Panc1 (cell line): ENCODE measurements at regions of chr4 and their contacts with region 1.

Region 1: GRCh38 chr4:151325111-151325948 is at the start of gene SH3D19:
- DNase-seq: no peak
- ATAC-seq: peak; percentile 98
- H3K4me3 ChIP-seq: peak within 1 kb of the TSS; percentile 61 to 68
- H3K27ac ChIP-seq: peak within 1 kb of the TSS; percentile 73
- H3K4me1 ChIP-seq: peaks cover 19% of the 10 kb centered on the region
- H3K27me3 ChIP-seq: no peaks in the 10 kb centered on the region
- CTCF ChIP-seq: no peak
- total RNA-seq, gene SH3D19: 19.8 TPM

Region 2: DNA sequence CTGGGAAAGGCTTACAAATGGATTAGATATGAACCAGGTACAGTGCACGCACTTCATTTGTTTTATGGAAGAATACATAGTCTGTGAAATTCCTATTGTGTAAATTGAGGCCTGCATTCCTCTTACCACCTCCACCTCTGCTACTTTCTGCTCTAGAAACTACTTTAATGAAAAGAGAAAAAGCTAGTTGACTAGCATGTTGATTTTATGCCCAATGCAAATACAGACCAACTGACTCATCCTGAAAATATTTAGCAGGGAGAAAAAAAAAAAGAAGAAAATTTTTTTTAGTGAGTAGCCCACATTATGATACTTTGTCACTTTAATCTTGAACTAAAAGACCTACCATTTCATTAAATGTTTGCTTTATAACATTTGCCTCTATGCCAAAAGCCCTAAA is 1205.8 kb before region 1 on chr4:
- CTCF ChIA-PET with region 1: interaction called, 13 read pairs
- POLR2A ChIA-PET with region 1: no interaction called
- in situ Hi-C with region 1: no loop called
- intact Hi-C with region 1: no loop called
- DNase-seq: no peak
- ATAC-seq: peak; percentile 54; the same call in 1 of the 2 replicates
- H3K4me3 ChIP-seq: no peak overlapping the region
- H3K27ac ChIP-seq: peak overlapping the region; percentile 70
- H3K4me1 ChIP-seq: peaks cover 42% of the 10 kb centered on the region
- H3K27me3 ChIP-seq: no peaks in the 10 kb centered on the region
- CTCF ChIP-seq: no peak

Region 3: DNA sequence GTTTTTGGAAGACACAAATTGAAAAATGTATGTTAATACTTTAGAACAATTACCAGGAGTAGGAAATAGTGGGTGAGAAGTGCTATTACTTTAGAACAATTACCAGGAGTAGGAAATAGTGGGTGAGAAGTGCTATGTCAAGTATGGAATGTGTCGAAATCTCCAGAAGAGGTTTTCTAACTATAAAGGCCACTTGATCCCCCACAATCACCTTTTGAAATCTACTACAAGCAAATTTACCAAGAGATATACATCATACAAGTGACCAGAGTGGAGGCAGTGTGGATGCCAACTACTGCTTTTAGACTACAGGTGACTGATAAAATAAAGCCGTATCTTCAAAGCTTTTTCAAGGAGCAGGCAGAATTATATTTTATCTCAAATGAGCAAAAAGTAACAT is 700.3 kb before region 1 on chr4:
- CTCF ChIA-PET with region 1: interaction called, 15 read pairs
- POLR2A ChIA-PET with region 1: no interaction called
- in situ Hi-C with region 1: no loop called
- intact Hi-C with region 1: no loop called
- DNase-seq: no peak
- ATAC-seq: no peak
- H3K4me3 ChIP-seq: no peak overlapping the region
- H3K27ac ChIP-seq: no peak overlapping the region
- H3K4me1 ChIP-seq: no peaks in the 10 kb centered on the region
- H3K27me3 ChIP-seq: no peaks in the 10 kb centered on the region
- CTCF ChIP-seq: no peak